PC-3 (cell line): ENCODE measurements at regions of chr13 and their contacts with region 1.

Region 1: GRCh38 chr13:26707122-26708006 is 53.2 kb downstream of the GPR12 start:
- DNase-seq: peak; percentile 63
- ATAC-seq: peak; percentile 85
- H3K4me3 ChIP-seq: no peak overlapping the region
- H3K27ac ChIP-seq: no peak overlapping the region
- H3K4me1 ChIP-seq: no peaks in the 10 kb centered on the region
- H3K27me3 ChIP-seq: peaks cover 33% of the 10 kb centered on the region
- CTCF ChIP-seq: peak; percentile 67

Region 2: GRCh38 chr13:26872525-26873385 is 165.4 kb after region 1 on chr13:
- CTCF ChIA-PET with region 1: no interaction called
- POLR2A ChIA-PET with region 1: no interaction called
- intact Hi-C with region 1: loop called (anchors 5 kb)
- DNase-seq: peak; percentile 55
- ATAC-seq: no peak
- H3K4me3 ChIP-seq: no peak overlapping the region
- H3K27ac ChIP-seq: no peak overlapping the region
- H3K4me1 ChIP-seq: no peaks in the 10 kb centered on the region
- H3K27me3 ChIP-seq: peaks cover 5% of the 10 kb centered on the region
- CTCF ChIP-seq: peak; percentile 76

Region 3: DNA sequence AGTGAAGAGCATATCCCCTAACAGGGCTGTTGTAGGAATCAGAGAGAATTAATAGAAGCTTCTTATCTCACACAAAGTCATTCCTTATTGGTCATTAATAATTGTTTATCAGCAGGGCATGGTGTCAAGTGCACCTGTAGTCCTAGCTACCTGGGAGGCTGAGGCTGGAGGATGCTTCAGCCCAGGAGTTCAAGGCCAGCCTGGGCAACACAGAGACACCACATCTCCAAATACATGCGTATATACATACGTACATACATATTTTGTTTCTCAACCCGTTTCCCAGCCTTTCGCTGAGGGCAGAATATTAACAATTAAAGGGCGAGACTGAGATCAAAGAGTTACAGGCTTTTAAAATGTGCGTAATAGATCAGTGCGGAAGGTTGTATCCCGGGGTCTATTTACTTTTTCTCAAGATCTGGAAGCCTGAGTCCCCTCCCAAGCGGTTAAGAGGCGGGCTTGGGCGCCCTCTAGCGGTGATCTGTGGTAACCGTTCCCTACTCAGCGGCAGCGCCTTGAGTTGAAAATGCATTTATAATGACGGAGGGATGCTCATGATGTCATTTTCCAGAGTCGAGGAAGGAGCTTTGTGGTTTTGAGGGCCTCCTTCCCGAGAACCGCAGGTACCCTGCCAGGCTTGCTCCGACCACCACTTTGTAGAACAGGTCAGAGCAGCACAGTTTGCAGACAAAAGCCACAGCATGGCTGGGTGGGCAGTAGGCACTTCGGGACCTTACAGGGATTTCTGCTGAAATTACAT is 222.8 kb after region 1 on chr13:
- CTCF ChIA-PET with region 1: interaction called, 7 read pairs
- POLR2A ChIA-PET with region 1: no interaction called
- intact Hi-C with region 1: loop called (anchors 1 kb)
- DNase-seq: peak; percentile 76
- ATAC-seq: peak; percentile 88
- H3K4me3 ChIP-seq: peak overlapping the region; percentile 34; the same call in 1 of the 2 replicates
- H3K27ac ChIP-seq: no peak overlapping the region
- H3K4me1 ChIP-seq: no peaks in the 10 kb centered on the region
- H3K27me3 ChIP-seq: peaks cover 26% of the 10 kb centered on the region
- CTCF ChIP-seq: peak; percentile 94